AG04450 (cell line): ENCODE measurements at regions of chr11 and their contacts with region 1.

Region 1: DNA sequence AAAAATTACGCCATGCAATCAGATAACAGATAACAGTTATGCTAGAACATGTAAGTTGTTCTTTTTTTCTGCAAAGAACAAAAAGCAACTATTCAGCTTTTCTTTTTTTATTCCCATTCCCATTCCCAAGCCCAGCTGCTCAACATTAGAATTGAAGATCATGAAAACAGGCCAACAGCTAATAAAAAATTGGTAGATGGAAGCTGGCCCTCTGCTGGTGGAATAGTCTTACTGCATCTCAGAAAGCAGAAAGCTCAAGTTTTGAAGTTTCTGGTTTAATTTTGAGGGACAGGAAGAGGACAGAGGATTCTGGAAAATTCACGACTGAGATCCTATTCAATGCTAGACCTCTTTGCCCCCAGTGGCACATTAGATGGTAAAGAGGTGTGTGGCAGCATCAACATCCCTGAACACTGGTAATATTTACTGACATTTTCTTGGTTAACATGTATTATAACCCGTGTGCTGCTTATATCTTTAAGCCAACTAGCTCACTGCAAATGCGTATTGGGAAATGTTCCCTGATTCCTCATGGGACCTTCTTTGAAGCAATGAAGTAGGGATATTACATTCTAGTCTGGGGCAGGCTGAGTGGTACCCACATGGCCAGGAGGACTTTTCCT is 591.2 kb downstream of the OPCML start:
- DNase-seq: peak; percentile 15
- H3K4me3 ChIP-seq: no peak overlapping the region
- H3K27ac ChIP-seq: no peak overlapping the region
- H3K27me3 ChIP-seq: peaks cover 7% of the 10 kb centered on the region
- CTCF ChIP-seq: peak; percentile 90

Region 2: DNA sequence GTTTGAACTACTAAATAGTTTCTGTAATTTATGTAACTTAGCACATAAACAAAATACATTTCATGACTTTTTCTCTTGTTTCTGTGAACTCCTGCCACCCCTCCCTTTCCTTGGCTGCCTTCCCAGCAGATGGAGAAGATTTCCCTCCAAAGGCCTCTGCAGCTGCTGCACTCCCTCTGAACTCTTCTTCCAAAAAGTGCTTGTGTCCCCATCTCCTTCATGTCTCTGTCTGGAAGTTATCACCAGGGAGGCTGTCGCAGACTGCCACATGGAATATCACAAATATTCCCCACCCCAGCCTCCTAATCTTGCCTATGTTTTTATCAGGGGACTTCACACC is 477.2 kb before region 1 on chr11:
- CTCF ChIA-PET with region 1: interaction called, 11 read pairs
- POLR2A ChIA-PET with region 1: no interaction called
- DNase-seq: no peak
- H3K4me3 ChIP-seq: no peak overlapping the region
- H3K27ac ChIP-seq: no peak overlapping the region
- H3K27me3 ChIP-seq: no peaks in the 10 kb centered on the region
- CTCF ChIP-seq: no peak

Region 3: GRCh38 chr11:132586801-132587200 is 354.3 kb before region 1 on chr11:
- CTCF ChIA-PET with region 1: interaction called, 11 read pairs
- POLR2A ChIA-PET with region 1: no interaction called
- DNase-seq: peak; percentile 13
- H3K4me3 ChIP-seq: no peak overlapping the region
- H3K27ac ChIP-seq: no peak overlapping the region
- H3K27me3 ChIP-seq: no peaks in the 10 kb centered on the region
- CTCF ChIP-seq: no peak

Region 4: GRCh38 chr11:132858223-132858622 is 82.9 kb before region 1 on chr11:
- CTCF ChIA-PET with region 1: interaction called, 26 read pairs
- POLR2A ChIA-PET with region 1: interaction called, 4 read pairs
- DNase-seq: peak; percentile 39
- H3K4me3 ChIP-seq: no peak overlapping the region
- H3K27ac ChIP-seq: no peak overlapping the region
- H3K27me3 ChIP-seq: no peaks in the 10 kb centered on the region
- CTCF ChIP-seq: peak; percentile 67

Region 5: GRCh38 chr11:132911186-132911585 is 29.9 kb before region 1 on chr11:
- CTCF ChIA-PET with region 1: interaction called, 10 read pairs
- POLR2A ChIA-PET with region 1: no interaction called
- DNase-seq: peak; percentile 4
- H3K4me3 ChIP-seq: no peak overlapping the region
- H3K27ac ChIP-seq: no peak overlapping the region
- H3K27me3 ChIP-seq: no peaks in the 10 kb centered on the region
- CTCF ChIP-seq: no peak

Region 6: DNA sequence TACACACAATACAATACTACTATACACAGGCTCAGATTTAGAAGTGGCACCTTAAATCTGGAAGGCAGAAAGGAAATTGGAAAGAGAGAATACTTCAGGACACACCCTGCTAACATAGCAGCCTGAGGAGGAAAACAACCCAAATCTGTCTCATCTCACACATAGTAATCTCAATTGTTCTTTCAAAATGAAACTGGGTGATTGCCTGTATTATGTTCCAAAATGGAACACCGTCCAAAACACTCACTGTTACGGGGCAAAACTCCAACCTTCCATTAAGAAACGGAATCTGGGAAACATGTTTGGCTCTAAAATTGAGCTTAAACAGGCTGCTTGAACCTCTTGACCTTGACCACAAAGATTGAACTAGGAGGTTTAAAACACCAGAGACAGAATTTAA is 18.6 kb after region 1 on chr11:
- CTCF ChIA-PET with region 1: interaction called, 11 read pairs
- POLR2A ChIA-PET with region 1: no interaction called
- DNase-seq: no peak
- H3K4me3 ChIP-seq: no peak overlapping the region
- H3K27ac ChIP-seq: no peak overlapping the region
- H3K27me3 ChIP-seq: no peaks in the 10 kb centered on the region
- CTCF ChIP-seq: no peak